Gastrocnemius medialis (tissue), 4 donors: ENCODE measurements at regions of chr13 and their contacts with region 1.

Region 1: GRCh38 chr13:98445340-98446233 is 131.3 kb downstream of the STK24 start:
- DNase-seq: peak; percentile 37 to 59
- ATAC-seq: peak; percentile 53 to 65
- H3K4me3 ChIP-seq: no peak overlapping the region
- H3K27ac ChIP-seq: peak overlapping the region in 3 of 4 donors; percentile 14 to 40 (median 17)
- H3K4me1 ChIP-seq: peaks cover 10 to 17% of the 10 kb centered on the region in 2 donors
- H3K27me3 ChIP-seq: no peaks in the 10 kb centered on the region
- CTCF ChIP-seq: peak; percentile 82 to 97 (median 96)
- POLR2A ChIP-seq: no peak

Region 2: DNA sequence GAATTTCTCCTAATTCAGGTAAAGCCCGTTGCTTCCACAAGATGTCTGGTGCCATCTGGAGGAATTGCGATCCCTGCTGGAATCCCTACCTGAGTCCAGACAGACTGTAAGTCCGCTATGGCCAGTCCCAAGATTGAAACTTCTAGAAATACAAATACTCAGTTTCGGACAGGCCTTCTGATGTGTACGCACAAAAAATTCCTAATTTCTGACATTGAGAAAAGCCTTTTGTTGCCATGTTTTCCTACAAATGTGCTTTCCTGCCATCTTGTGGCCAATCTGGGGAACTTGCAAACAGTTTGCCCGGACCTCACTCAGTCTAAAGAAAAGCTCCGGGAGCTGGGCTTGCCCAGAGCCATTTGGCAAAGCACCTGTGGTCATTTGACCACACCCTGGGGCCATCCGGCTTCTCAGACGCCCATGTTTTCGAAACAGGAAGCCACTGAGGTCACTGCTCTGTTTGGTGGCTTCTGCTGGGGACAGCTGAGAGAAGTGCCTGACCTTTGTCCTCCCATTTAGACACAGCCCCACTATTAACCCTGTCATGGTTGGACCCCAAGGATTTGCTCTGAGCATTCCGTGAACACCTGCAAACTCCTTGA is 227.5 kb after region 1 on chr13:
- in situ Hi-C with region 1: no loop called
- intact Hi-C with region 1: loop called (anchors 1 kb)
- DNase-seq: peak; percentile 50 to 86
- ATAC-seq: peak; percentile 92 to 96
- H3K4me3 ChIP-seq: peak overlapping the region in 1 of 4 donors; percentile 0
- H3K27ac ChIP-seq: peak overlapping the region in 1 of 4 donors; percentile 34
- H3K4me1 ChIP-seq: peaks cover 6 to 10% of the 10 kb centered on the region in 2 donors
- H3K27me3 ChIP-seq: no peaks in the 10 kb centered on the region
- CTCF ChIP-seq: peak; percentile 70 to 90 (median 79)
- POLR2A ChIP-seq: no peak